ENCODE measurements at regions of chr17 and their contacts with region 1.

Region 1: GRCh38 chr17:39863918-39864746 is at the start of gene IKZF3:
- DNase-seq: peak; percentile 69 to 87 (median 76)
- ATAC-seq: peak; percentile 89
- H3K4me3 ChIP-seq: peak within 1 kb of the TSS; percentile 69
- H3K4me3 Mint-ChIP-seq: peak within 1 kb of the TSS; percentile 86 to 98 (median 94)
- H3K27ac ChIP-seq: peak within 1 kb of the TSS; percentile 99
- H3K27ac Mint-ChIP-seq: peak within 1 kb of the TSS; percentile 86 to 98 (median 97)
- H3K4me1 ChIP-seq: peaks cover 27 to 33% of the 10 kb centered on the region in 2 donors
- H3K4me1 Mint-ChIP-seq: peaks cover 22 to 88% (median 68%) of the 10 kb centered on the region in 7 donors
- H3K27me3 ChIP-seq: no peaks in the 10 kb centered on the region
- H3K27me3 Mint-ChIP-seq: no peaks in the 10 kb centered on the region
- total RNA-seq, gene IKZF3: 26.1 to 77.8 (median 61.1) TPM

Region 2: GRCh38 chr17:39461113-39461925 is 402.8 kb before region 1 on chr17 and contains the start of gene CDK12:
- CTCF ChIA-PET with region 1: no interaction called
- POLR2A ChIA-PET with region 1: no interaction called
- intact Hi-C with region 1: no loop called
- DNase-seq: peak; percentile 76 to 98 (median 95)
- ATAC-seq: peak; percentile 91
- H3K4me3 ChIP-seq: peak within 1 kb of the TSS; percentile 73
- H3K4me3 Mint-ChIP-seq: peak within 1 kb of the TSS; percentile 93 to 100 (median 98)
- H3K27ac ChIP-seq: peak within 1 kb of the TSS; percentile 89
- H3K27ac Mint-ChIP-seq: peak within 1 kb of the TSS; percentile 89 to 99 (median 97)
- H3K4me1 ChIP-seq: peaks cover 8 to 13% of the 10 kb centered on the region in 2 donors
- H3K4me1 Mint-ChIP-seq: peaks cover 27 to 51% (median 41%) of the 10 kb centered on the region in 7 donors
- H3K27me3 ChIP-seq: no peaks in the 10 kb centered on the region
- H3K27me3 Mint-ChIP-seq: no peaks in the 10 kb centered on the region
- total RNA-seq, gene CDK12: 94.9 to 118 (median 112) TPM

Region 3: DNA sequence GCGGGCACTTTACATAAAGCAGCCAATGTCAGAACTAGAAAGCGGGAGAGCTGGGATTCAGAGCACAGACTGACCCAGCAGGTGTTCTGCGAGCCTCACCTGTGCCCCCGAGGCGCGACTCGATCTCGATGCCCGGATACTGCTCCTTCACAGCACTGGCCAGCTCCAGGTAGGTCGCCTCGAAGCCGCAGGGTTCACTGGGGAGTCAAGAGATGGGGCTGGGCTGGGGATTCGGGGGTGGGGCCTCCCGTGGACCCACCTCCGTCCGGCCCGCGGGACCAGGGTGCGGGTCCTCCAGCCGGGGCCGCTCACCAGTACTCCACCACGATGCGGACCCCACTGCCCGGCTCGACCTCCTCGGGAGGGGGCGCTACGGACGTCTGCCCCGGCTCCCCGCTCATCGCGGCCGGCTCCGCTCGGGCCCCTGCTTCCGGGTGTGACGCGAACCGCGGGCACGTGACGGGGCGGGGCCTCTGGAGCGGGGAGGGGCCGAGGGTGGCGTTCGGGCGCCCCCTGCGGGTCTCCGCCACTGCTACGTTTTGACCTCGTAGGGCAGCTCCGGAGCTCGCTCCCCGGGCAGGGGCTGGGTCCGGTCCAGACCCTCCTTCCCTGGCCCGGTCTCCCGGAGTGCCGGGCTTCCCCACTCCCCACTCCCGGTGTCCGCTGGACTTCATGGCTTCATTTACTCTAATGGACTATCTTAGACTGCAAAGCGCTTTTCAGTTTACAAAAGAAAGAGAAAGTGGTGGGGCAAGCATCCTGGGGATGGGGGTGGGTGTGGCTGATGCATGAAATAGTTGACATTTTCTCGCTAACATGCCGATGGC is 133.8 kb before region 1 on chr17 and contains the start of gene MIEN1:
- CTCF ChIA-PET with region 1: interaction called, 7 read pairs
- POLR2A ChIA-PET with region 1: interaction called, 28 read pairs
- intact Hi-C with region 1: loop called (anchors 1 kb)
- DNase-seq: peak; percentile 87 to 100 (median 95)
- ATAC-seq: peak; percentile 98
- H3K4me3 ChIP-seq: peak within 1 kb of the TSS; percentile 95
- H3K4me3 Mint-ChIP-seq: peak within 1 kb of the TSS; percentile 88 to 96 (median 92)
- H3K27ac ChIP-seq: peak within 1 kb of the TSS; percentile 95
- H3K27ac Mint-ChIP-seq: peak within 1 kb of the TSS; percentile 84 to 98 (median 94)
- H3K4me1 ChIP-seq: peaks cover 10% of the 10 kb centered on the region in 2 donors
- H3K4me1 Mint-ChIP-seq: peaks cover 11 to 20% (median 16%) of the 10 kb centered on the region in 7 donors
- H3K27me3 ChIP-seq: no peaks in the 10 kb centered on the region
- H3K27me3 Mint-ChIP-seq: peaks cover 0 to 7% (median 0%) of the 10 kb centered on the region in 5 donors
- total RNA-seq, gene MIEN1: 28.7 to 40.1 (median 32.3) TPM

Region 4: GRCh38 chr17:39777534-39778365 is 86.4 kb before region 1 on chr17:
- CTCF ChIA-PET with region 1: interaction called, 7 read pairs
- POLR2A ChIA-PET with region 1: interaction called, 15 read pairs
- intact Hi-C with region 1: loop called (anchors 1 to 5 kb)
- DNase-seq: peak in 1 of 9 donors; percentile 40
- ATAC-seq: peak; percentile 72
- H3K4me3 ChIP-seq: peak overlapping the region; percentile 74
- H3K4me3 Mint-ChIP-seq: peak overlapping the region; percentile 79 to 95 (median 90)
- H3K27ac ChIP-seq: peak overlapping the region; percentile 77
- H3K27ac Mint-ChIP-seq: peak overlapping the region; percentile 68 to 98 (median 94)
- H3K4me1 ChIP-seq: peaks cover 61 to 75% of the 10 kb centered on the region in 2 donors
- H3K4me1 Mint-ChIP-seq: peaks cover 60 to 91% (median 86%) of the 10 kb centered on the region in 7 donors
- H3K27me3 ChIP-seq: no peaks in the 10 kb centered on the region
- H3K27me3 Mint-ChIP-seq: no peaks in the 10 kb centered on the region

Region 5: DNA sequence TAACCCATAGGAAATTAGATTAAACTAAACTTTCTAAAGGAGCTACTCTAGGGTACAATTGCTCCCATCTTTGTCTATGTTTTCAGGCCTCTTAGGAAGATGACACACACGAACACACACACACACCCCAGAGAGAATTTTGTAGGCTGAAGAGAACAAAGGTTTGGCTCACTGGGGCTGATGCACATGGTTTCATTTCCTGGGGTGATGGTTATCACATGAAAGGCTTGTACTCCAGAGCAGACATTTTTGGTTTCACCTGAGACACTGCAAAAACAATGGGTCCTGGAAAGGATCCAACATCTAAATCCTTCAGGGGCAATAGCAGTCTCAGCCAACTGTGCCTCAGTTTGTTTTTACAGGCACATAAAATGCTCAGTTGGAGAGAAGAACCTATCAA is 63.6 kb before region 1 on chr17:
- CTCF ChIA-PET with region 1: interaction called, 3 read pairs
- POLR2A ChIA-PET with region 1: interaction called, 4 read pairs
- intact Hi-C with region 1: loop called in 1 of 2 experiments (anchors 1 kb)
- DNase-seq: peak in 8 of 9 donors; percentile 46 to 81 (median 80)
- ATAC-seq: peak; percentile 99
- H3K4me3 ChIP-seq: peak overlapping the region; percentile 38
- H3K4me3 Mint-ChIP-seq: peak overlapping the region; percentile 22 to 81 (median 61)
- H3K27ac ChIP-seq: peak overlapping the region; percentile 52
- H3K27ac Mint-ChIP-seq: peak overlapping the region; percentile 89 to 97 (median 94)
- H3K4me1 ChIP-seq: peaks cover 27 to 53% of the 10 kb centered on the region in 2 donors
- H3K4me1 Mint-ChIP-seq: peaks cover 35 to 82% (median 69%) of the 10 kb centered on the region in 7 donors
- H3K27me3 ChIP-seq: no peaks in the 10 kb centered on the region
- H3K27me3 Mint-ChIP-seq: no peaks in the 10 kb centered on the region

Region 6: DNA sequence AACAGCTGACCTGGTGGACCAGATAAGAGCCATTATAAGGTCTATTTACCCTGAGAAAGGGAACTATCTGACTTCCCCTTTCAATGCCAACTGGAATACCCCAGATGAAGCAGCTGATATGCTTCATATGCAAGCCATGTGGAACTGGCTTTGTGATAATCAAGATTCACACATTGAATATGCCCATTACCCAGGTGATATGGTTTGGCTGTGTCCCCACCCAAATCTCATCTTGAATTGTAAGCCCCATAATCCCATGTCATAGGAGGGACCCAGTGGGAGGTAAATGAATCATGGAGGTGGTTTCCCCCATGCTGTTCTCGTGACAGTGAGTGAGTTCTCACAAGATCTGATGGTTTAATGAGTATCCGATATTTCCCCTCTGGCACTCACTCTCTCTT is 42.1 kb before region 1 on chr17:
- CTCF ChIA-PET with region 1: interaction called, 5 read pairs
- POLR2A ChIA-PET with region 1: interaction called, 36 read pairs
- intact Hi-C with region 1: loop called in 1 of 2 experiments (anchors 2 kb)
- DNase-seq: no peak
- ATAC-seq: no peak
- H3K4me3 ChIP-seq: no peak overlapping the region
- H3K4me3 Mint-ChIP-seq: peak overlapping the region in 3 of 10 donors; percentile 55 to 73 (median 67)
- H3K27ac ChIP-seq: peak overlapping the region; percentile 61
- H3K27ac Mint-ChIP-seq: peak overlapping the region in 8 of 9 donors; percentile 79 to 97 (median 93)
- H3K4me1 ChIP-seq: peaks cover 44 to 50% of the 10 kb centered on the region in 2 donors
- H3K4me1 Mint-ChIP-seq: peaks cover 26 to 66% (median 48%) of the 10 kb centered on the region in 7 donors
- H3K27me3 ChIP-seq: no peaks in the 10 kb centered on the region
- H3K27me3 Mint-ChIP-seq: no peaks in the 10 kb centered on the region

Region 7: DNA sequence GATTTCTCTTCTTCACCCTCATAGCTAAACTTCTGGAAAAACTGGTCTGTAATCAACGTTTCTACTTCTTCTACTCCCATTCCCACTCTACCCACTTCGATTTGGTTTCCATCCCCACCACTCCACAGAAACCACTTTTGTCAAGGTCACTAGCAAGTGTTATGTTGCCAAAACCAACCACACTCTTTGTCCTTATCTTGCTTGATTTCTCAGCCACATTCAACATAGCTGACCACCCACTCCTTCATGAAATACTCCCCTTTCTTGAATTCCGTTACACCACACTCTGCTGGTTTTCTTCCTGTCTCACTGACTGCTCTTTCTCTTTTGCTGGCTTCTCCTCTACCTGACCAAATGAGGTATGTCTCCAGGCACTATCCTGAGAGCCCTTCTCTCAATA is 11.9 kb before region 1 on chr17:
- CTCF ChIA-PET with region 1: interaction called, 5 read pairs
- POLR2A ChIA-PET with region 1: interaction called, 30 read pairs
- intact Hi-C with region 1: loop called in 1 of 2 experiments (anchors 1 kb)
- DNase-seq: no peak
- ATAC-seq: no peak
- H3K4me3 ChIP-seq: no peak overlapping the region
- H3K4me3 Mint-ChIP-seq: peak overlapping the region in 8 of 10 donors; percentile 0 to 45 (median 20)
- H3K27ac ChIP-seq: peak overlapping the region; percentile 29
- H3K27ac Mint-ChIP-seq: peak overlapping the region in 8 of 9 donors; percentile 65 to 91 (median 74)
- H3K4me1 ChIP-seq: peaks cover 18 to 33% of the 10 kb centered on the region in 2 donors
- H3K4me1 Mint-ChIP-seq: peaks cover 29 to 69% (median 68%) of the 10 kb centered on the region in 7 donors
- H3K27me3 ChIP-seq: no peaks in the 10 kb centered on the region
- H3K27me3 Mint-ChIP-seq: no peaks in the 10 kb centered on the region

Measured in naive thymus-derived CD4-positive, alpha-beta T cell (primary cell).